ENCODE measurements at regions of chr19 and their contacts with region 1.

Region 1: GRCh38 chr19:13104360-13104847 is 1.7 kb upstream of the LYL1 start:
- DNase-seq: peak; percentile 67 to 82 (median 76)
- ATAC-seq: peak; percentile 44
- H3K4me3 ChIP-seq: no peak overlapping the region
- H3K27ac ChIP-seq: peak overlapping the region; percentile 98
- H3K4me1 ChIP-seq: peaks cover 16 to 48% of the 10 kb centered on the region in 2 experiments
- H3K27me3 ChIP-seq: no peaks in the 10 kb centered on the region
- CTCF ChIP-seq: peak; percentile 81 to 95 (median 84)
- EP300 ChIP-seq: no peak
- POLR2A ChIP-seq: peak; percentile 62
- RAD21 ChIP-seq: peak; percentile 61 to 74

Region 2: GRCh38 chr19:13234518-13234917 is 130.1 kb after region 1 on chr19:
- CTCF ChIA-PET with region 1: no interaction called
- POLR2A ChIA-PET with region 1: no interaction called
- in situ Hi-C with region 1: no loop called
- intact Hi-C with region 1: loop called (anchors 10 kb)
- DNase-seq: peak; percentile 88 to 92 (median 92)
- ATAC-seq: peak; percentile 99
- H3K4me3 ChIP-seq: no peak overlapping the region
- H3K27ac ChIP-seq: no peak overlapping the region
- H3K4me1 ChIP-seq: peaks cover 6 to 19% of the 10 kb centered on the region in 2 experiments; a peak in 4 of 5 replicates
- H3K27me3 ChIP-seq: peaks cover 0 to 40% of the 10 kb centered on the region in 2 experiments; a peak in 3 of 5 replicates
- CTCF ChIP-seq: peak; percentile 95 to 99 (median 98)
- EP300 ChIP-seq: no peak
- POLR2A ChIP-seq: no peak
- RAD21 ChIP-seq: peak; percentile 32 to 70

Measured in K562 (cell line).